ENCODE measurements at regions of chr15 and their contacts with region 1.

Region 1: DNA sequence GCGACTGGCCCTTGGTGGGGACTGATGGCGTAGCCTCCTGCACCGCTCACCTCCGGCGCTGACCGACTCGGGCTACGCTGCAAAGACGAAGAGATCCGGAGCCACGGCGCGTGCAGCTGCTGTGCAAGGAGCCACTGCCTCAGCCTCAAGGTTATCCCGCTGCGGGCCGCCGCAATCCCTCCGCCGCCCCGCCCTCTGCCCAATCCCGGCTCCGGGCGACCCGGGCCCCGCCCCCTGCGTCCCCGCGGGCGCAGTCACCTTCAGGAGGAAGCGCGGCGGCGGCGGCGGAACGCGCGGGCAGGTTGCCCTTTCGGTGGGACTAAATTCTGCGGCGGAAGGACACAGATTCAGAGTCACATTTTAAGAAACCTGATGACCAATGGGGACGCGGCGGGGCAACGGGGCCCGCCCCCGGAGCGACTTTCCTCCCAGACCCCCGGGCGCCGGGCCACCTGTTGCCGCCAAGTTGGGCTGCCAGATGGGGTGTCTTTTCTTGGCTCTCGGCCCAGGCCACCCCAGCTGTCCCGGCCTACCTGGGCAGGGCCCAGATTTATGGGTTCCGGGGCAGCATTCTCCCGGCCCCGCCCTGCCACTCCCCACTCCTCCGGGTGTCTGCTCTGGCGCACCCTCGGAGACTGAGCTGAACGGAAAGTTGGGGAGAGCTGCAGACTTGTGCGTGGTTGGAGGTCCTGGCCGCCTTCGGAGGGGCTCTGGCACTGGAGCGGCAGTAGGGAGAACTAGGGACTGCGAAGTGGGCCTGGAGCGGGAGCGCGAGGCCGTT is at the start of gene PKM:
- DNase-seq: peak; percentile 96
- ATAC-seq: peak; percentile 52
- H3K4me3 ChIP-seq: peak within 1 kb of the TSS; percentile 77 to 96 (median 93)
- H3K4me3 Mint-ChIP-seq: peak within 1 kb of the TSS; percentile 94
- H3K27ac ChIP-seq: peak within 1 kb of the TSS; percentile 91 to 94
- H3K27ac Mint-ChIP-seq: peak within 1 kb of the TSS; percentile 97
- H3K4me1 ChIP-seq: peaks cover 37 to 44% of the 10 kb centered on the region in 2 donors
- H3K4me1 Mint-ChIP-seq: peaks cover 38% of the 10 kb centered on the region
- H3K27me3 ChIP-seq: no peaks in the 10 kb centered on the region
- H3K27me3 Mint-ChIP-seq: no peaks in the 10 kb centered on the region
- CTCF ChIP-seq: no peak
- total RNA-seq, gene PKM: 306 and 323 TPM in 2 replicates

Region 2: GRCh38 chr15:72217216-72217615 is 14.0 kb before region 1 on chr15:
- CTCF ChIA-PET with region 1: interaction called, 3 read pairs
- POLR2A ChIA-PET with region 1: interaction called, 4 read pairs
- intact Hi-C with region 1: loop called (anchors 1 kb)
- DNase-seq: no peak
- ATAC-seq: no peak
- H3K4me3 ChIP-seq: no peak overlapping the region
- H3K4me3 Mint-ChIP-seq: no peak overlapping the region
- H3K27ac ChIP-seq: no peak overlapping the region
- H3K27ac Mint-ChIP-seq: no peak overlapping the region
- H3K4me1 ChIP-seq: peaks cover 0 to 5% of the 10 kb centered on the region in 2 donors
- H3K4me1 Mint-ChIP-seq: peaks cover 16% of the 10 kb centered on the region
- H3K27me3 ChIP-seq: no peaks in the 10 kb centered on the region
- H3K27me3 Mint-ChIP-seq: no peaks in the 10 kb centered on the region
- CTCF ChIP-seq: no peak

Region 3: DNA sequence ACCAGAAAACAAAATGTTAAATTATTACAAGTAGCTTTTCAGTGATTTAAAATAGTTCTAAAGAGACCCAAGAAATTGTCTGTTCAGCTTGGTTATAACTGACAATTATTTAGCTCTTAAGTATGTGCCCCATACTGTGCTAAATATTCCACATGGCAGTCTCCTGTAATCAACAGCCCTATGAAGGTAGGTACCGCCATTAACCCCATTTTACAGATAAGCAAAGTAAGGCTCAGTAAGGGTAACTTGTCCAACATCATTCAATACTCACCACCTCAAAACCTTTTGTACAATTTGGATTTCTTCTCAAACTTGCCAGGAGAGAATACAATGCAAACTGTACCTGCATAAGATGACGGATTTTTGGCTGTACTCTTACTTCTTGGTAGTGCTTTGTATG is 518.4 kb after region 1 on chr15:
- CTCF ChIA-PET with region 1: no interaction called
- POLR2A ChIA-PET with region 1: no interaction called
- intact Hi-C with region 1: no loop called
- DNase-seq: no peak
- ATAC-seq: no peak
- H3K4me3 ChIP-seq: no peak overlapping the region
- H3K4me3 Mint-ChIP-seq: no peak overlapping the region
- H3K27ac ChIP-seq: no peak overlapping the region
- H3K27ac Mint-ChIP-seq: no peak overlapping the region
- H3K4me1 ChIP-seq: peaks cover 12 to 13% of the 10 kb centered on the region in 2 donors
- H3K4me1 Mint-ChIP-seq: peaks cover 18% of the 10 kb centered on the region
- H3K27me3 ChIP-seq: no peaks in the 10 kb centered on the region
- H3K27me3 Mint-ChIP-seq: no peaks in the 10 kb centered on the region
- CTCF ChIP-seq: no peak